ENCODE measurements at regions of chr4 and their contacts with region 1.

Region 1: GRCh38 chr4:55853484-55854046 is at the start of gene EXOC1:
- DNase-seq: peak; percentile 99
- ATAC-seq: peak; percentile 98
- H3K4me3 Mint-ChIP-seq: no peak within 1 kb of the TSS
- H3K27ac Mint-ChIP-seq: peak within 1 kb of the TSS; percentile 83
- H3K4me1 Mint-ChIP-seq: peaks cover 35% of the 10 kb centered on the region
- H3K27me3 Mint-ChIP-seq: no peaks in the 10 kb centered on the region
- total RNA-seq, gene EXOC1: 19.1 to 21.4 TPM

Region 2: DNA sequence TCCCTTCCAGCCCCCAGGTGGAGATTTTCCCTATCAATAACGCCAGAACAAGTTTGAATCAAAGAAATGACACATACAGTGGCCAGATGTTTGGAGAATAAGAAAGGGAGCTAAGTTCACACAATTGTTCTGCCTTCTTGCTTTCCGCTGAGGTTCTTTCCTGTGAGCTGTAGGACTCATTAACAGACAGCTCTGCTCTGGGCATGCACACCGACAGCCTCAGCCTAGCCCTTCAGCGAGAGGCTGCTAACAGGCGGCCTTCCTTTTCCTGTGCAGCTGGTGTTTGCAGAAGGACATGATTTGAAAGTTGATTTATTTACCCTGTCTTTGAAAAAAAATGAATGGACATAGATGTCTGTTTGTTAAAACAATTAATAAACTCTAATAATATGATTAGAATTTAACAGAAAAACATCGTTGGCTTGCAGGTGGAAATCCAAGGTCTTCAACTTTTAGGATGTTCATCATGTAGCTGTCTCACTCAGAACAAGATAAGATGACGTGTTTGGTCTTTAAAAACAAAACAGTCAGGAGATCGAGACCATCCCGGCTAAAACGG is 911.5 kb before region 1 on chr4:
- CTCF ChIA-PET with region 1: no interaction called
- POLR2A ChIA-PET with region 1: no interaction called
- intact Hi-C with region 1: loop called in 1 of 2 experiments (anchors 5 kb)
- DNase-seq: peak; percentile 58
- ATAC-seq: peak; percentile 77
- H3K4me3 Mint-ChIP-seq: peak overlapping the region; percentile 31
- H3K27ac Mint-ChIP-seq: peak overlapping the region; percentile 59
- H3K4me1 Mint-ChIP-seq: peaks cover 44% of the 10 kb centered on the region
- H3K27me3 Mint-ChIP-seq: no peaks in the 10 kb centered on the region

Region 3: DNA sequence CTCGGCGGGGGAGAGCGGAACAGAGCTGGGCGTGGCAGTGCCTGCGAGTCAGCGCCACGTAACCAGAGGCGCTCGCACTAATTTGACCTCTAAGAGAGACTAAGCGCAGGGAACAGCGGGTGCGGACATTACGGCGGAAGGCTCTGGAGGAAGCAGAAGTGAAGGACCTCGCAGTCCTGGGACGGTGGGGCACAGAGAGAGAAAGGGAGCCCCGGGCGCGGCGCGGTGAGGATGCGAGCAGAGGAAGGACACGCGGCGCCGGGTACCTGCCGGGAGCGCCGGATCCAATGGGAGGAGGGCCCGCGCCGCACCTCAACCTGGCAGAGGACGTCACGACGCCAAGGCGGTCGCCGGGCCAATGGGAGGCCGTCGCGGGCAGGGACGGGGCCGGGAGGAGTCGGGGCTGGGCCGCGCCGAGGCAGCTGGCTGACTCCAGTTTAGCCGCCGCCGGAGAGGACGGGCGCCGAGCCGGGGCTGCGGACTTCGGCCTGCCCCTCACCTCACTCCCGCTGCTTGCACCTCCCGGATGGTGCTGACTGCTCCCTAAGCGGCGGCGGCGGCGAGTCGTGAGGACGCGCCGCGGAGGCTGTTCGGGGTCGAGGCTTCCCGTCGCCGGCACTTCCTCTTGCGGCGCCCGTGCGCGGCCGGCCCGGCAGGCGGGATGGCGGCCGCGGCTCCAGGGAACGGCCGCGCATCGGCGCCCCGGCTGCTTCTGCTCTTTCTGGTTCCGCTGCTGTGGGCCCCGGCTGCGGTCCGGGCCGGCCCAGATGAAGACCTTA is 457.8 kb before region 1 on chr4 and contains the start of gene TMEM165:
- CTCF ChIA-PET with region 1: interaction called, 3 read pairs
- POLR2A ChIA-PET with region 1: no interaction called
- intact Hi-C with region 1: loop called (anchors 1 to 2 kb)
- DNase-seq: peak; percentile 96
- ATAC-seq: peak; percentile 97
- H3K4me3 Mint-ChIP-seq: peak within 1 kb of the TSS; percentile 89
- H3K27ac Mint-ChIP-seq: peak within 1 kb of the TSS; percentile 89
- H3K4me1 Mint-ChIP-seq: peaks cover 30% of the 10 kb centered on the region
- H3K27me3 Mint-ChIP-seq: no peaks in the 10 kb centered on the region
- total RNA-seq, gene TMEM165: 43.4 to 49.5 TPM

Region 4: DNA sequence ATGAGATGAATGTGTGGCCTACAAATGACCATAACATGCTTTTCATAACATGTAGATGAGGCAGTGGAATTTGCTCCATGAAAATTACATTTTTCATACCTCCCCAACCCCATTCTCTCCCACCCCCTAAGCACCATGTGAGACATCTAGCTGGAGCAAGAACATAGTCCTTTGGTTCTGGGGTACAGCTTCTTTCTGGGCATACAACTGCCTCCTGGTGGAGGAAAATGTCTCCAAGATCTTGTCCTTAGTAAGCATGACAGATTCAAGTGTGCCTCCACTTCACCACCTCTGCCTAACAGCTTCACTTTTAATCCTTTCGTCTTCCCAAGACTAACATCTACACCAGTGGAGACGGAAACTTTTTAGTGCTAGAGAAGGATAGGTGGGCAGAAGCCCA is 26.0 kb before region 1 on chr4:
- CTCF ChIA-PET with region 1: no interaction called
- POLR2A ChIA-PET with region 1: no interaction called
- intact Hi-C with region 1: loop called in 1 of 2 experiments (anchors 2 kb)
- DNase-seq: no peak
- ATAC-seq: no peak
- H3K4me3 Mint-ChIP-seq: no peak overlapping the region
- H3K27ac Mint-ChIP-seq: no peak overlapping the region
- H3K4me1 Mint-ChIP-seq: peaks cover 1% of the 10 kb centered on the region
- H3K27me3 Mint-ChIP-seq: peaks cover 24% of the 10 kb centered on the region

Region 5: DNA sequence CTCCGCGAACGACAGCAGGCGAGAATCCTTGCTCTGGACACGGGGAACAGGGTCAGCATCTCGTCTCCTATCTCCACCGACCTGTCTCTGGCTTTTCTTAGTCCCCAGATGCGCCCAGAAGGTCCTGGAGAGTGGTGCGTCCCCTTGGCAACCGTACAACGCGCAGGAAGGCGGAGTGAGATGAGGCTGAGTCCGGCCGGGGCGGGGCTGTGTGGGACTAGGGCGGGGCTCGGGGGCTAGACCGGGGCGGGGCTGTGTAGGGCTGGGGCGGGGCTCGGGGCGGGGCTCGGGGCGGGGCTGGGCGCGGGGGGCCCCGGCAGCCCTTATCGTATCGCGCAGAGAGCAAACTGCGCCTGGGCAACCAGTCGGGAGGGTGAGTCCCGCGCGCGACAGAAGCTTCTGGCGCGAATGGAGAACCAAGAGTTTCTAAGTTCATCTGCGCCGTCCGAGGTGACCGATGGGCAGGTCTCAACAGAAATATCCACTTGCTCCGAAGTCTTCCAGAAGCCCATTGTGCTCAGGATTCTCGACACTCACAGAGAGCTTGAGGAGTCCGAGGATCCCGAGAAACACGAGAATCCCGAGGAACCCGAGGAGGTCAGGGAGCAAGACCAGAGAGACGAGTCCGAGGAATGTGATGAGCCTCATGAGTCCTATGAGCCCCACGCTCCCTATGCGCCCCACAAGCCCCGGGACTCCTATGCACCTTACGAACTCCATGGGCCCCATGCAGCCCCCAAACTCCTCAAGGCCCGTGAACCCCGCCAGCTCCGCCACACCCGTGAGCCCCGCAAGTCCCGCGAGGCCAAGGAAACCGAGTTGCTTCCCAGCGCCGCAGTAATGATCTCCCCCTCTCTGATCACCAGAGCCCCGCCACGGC is 676.9 kb after region 1 on chr4:
- CTCF ChIA-PET with region 1: no interaction called
- POLR2A ChIA-PET with region 1: no interaction called
- intact Hi-C with region 1: loop called in 1 of 2 experiments (anchors 5 kb)
- DNase-seq: peak; percentile 92
- ATAC-seq: peak; percentile 99
- H3K4me3 Mint-ChIP-seq: no peak overlapping the region
- H3K27ac Mint-ChIP-seq: peak overlapping the region; percentile 11
- H3K4me1 Mint-ChIP-seq: peaks cover 3% of the 10 kb centered on the region
- H3K27me3 Mint-ChIP-seq: peaks cover 3% of the 10 kb centered on the region